ENCODE measurements at regions of chr22 and their contacts with region 1.

Region 1: GRCh38 chr22:27445881-27446280 is 355.7 kb downstream of the MN1 start:
- DNase-seq: peak; percentile 62 to 73 (median 70)
- ATAC-seq: peak in 3 of 4 donors; percentile 53 to 86 (median 81)
- H3K4me3 ChIP-seq: no peak overlapping the region
- H3K27ac ChIP-seq: peak overlapping the region in 2 of 12 donors; percentile 0 to 42
- H3K4me1 ChIP-seq: peaks cover 0 to 7% (median 0%) of the 10 kb centered on the region in 12 donors
- H3K27me3 ChIP-seq: peaks cover 0 to 10% (median 0%) of the 10 kb centered on the region in 9 donors
- CTCF ChIP-seq: no peak
- POLR2A ChIP-seq: no peak

Region 2: GRCh38 chr22:27397954-27398342 is 47.9 kb before region 1 on chr22:
- intact Hi-C with region 1: loop called in 1 of 10 experiments (anchors 5 kb)
- DNase-seq: peak; percentile 42 to 87 (median 73)
- ATAC-seq: peak in 3 of 4 donors; percentile 76 to 89 (median 81)
- H3K4me3 ChIP-seq: no peak overlapping the region
- H3K27ac ChIP-seq: peak overlapping the region in 1 of 12 donors; percentile 11
- H3K4me1 ChIP-seq: no peaks in the 10 kb centered on the region
- H3K27me3 ChIP-seq: peaks cover 0 to 18% (median 4%) of the 10 kb centered on the region in 9 donors
- CTCF ChIP-seq: no peak
- POLR2A ChIP-seq: no peak

Measured in heart left ventricle (tissue), 16 donors.